ENCODE measurements at regions of chr15 and their contacts with region 1.

Region 1: GRCh38 chr15:52078876-52079700 is 33.5 kb downstream of the BCL2L10 start:
- DNase-seq: peak; percentile 61
- H3K4me3 Mint-ChIP-seq: no peak overlapping the region
- H3K27ac Mint-ChIP-seq: no peak overlapping the region
- H3K4me1 Mint-ChIP-seq: peaks cover 38% of the 10 kb centered on the region
- H3K27me3 Mint-ChIP-seq: no peaks in the 10 kb centered on the region

Region 2: GRCh38 chr15:51888593-51889195 is 190.4 kb before region 1 on chr15:
- intact Hi-C with region 1: loop called (anchors 1 kb)
- DNase-seq: no peak
- H3K4me3 Mint-ChIP-seq: no peak overlapping the region
- H3K27ac Mint-ChIP-seq: no peak overlapping the region
- H3K4me1 Mint-ChIP-seq: peaks cover 8% of the 10 kb centered on the region
- H3K27me3 Mint-ChIP-seq: no peaks in the 10 kb centered on the region

Region 3: DNA sequence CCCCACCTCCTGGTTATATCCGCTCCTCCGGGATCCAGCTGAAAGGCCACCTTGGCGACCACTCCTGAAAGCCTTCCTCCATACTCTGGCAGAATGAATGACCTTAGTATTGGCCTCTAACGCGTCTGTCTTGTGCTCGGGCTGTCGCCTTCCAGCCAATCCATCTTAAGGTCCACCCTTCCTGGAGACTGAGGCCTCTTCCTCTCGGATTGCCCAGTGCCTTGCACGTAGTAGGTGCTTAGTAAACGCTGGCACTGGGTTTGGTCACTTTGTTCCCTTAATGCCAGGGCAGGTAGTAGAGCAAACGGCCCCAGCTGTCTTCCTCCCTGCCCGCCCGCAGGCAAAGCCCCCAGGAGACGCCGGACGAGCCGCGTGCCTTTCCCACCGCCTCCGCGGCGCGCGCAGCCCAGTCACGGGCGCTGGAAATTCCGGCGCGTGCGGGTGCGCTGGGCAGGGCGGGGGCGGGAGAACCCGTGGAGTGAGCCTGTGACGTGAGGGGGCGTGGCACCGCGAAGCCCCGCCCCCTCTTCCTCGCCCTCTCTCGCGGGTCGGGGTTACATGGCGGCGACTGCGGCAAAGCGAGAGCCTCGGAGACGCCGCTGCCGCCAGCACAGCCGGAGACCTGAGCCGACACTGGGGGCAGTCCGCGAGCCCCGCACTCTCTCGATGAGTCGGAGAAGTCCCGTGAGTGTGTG is 60.2 kb before region 1 on chr15 and contains the start of gene MAPK6:
- intact Hi-C with region 1: loop called (anchors 5 kb)
- DNase-seq: peak; percentile 91
- H3K4me3 Mint-ChIP-seq: peak within 1 kb of the TSS; percentile 98
- H3K27ac Mint-ChIP-seq: peak within 1 kb of the TSS; percentile 99
- H3K4me1 Mint-ChIP-seq: peaks cover 46% of the 10 kb centered on the region
- H3K27me3 Mint-ChIP-seq: peaks cover 7% of the 10 kb centered on the region
- total RNA-seq, gene MAPK6: 57.3 and 57.9 TPM in 2 replicates

Region 4: DNA sequence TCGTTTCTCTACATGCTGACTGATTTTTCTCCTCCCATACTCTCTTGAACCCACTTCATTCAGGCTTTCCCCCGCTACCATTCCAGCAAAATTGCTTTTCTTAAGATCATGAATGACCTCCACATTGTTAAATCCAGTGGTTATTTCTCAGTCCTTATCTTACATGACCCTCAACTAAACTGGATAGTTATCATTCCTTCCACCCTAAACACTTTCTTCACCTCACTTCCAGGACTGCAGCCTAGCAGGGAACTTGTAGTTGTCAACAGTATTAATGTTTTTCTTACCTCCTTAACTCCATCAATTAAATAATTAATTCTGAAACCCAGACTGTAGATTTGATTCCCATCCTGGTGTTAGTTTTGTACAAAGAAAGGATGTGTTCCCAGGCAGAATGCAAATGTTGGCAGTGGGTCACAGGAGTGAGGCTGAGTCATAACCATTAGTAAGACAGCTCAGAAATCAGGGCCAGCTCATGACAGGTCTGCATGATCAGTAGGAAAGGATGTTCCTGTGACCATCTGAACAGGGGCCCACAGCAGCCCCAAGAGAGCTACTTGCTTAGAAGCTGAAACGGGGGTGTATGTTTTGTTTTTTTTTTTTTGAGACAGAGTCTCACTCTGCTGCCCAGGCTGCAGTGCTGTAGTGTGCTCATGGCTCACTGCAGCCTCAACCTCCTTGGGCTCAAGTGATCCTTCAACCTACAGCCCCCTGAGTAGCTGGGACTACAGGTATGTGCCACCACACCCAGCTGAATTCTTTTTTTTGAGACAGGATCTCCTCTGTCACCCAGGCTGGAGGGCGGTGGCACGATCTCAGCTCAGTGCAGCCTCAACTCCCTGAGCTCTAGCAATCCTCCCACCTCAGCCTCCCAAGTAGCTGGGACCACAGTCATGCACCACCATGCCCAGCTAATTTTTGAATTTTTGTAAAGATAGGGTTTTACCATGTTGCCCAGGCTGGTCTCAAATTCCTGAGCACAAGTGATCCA is 24.4 kb after region 1 on chr15:
- intact Hi-C with region 1: no loop called
- DNase-seq: no peak
- H3K4me3 Mint-ChIP-seq: no peak overlapping the region
- H3K27ac Mint-ChIP-seq: no peak overlapping the region
- H3K4me1 Mint-ChIP-seq: no peaks in the 10 kb centered on the region
- H3K27me3 Mint-ChIP-seq: peaks cover 9% of the 10 kb centered on the region

Region 5: GRCh38 chr15:52139599-52140491 is 60.8 kb after region 1 on chr15:
- intact Hi-C with region 1: loop called (anchors 5 kb)
- DNase-seq: peak; percentile 53
- H3K4me3 Mint-ChIP-seq: no peak overlapping the region
- H3K27ac Mint-ChIP-seq: peak overlapping the region; percentile 4
- H3K4me1 Mint-ChIP-seq: peaks cover 7% of the 10 kb centered on the region
- H3K27me3 Mint-ChIP-seq: no peaks in the 10 kb centered on the region

Region 6: GRCh38 chr15:52642386-52643361 is 563.6 kb after region 1 on chr15:
- intact Hi-C with region 1: no loop called
- DNase-seq: no peak
- H3K4me3 Mint-ChIP-seq: no peak overlapping the region
- H3K27ac Mint-ChIP-seq: no peak overlapping the region
- H3K4me1 Mint-ChIP-seq: peaks cover 23% of the 10 kb centered on the region
- H3K27me3 Mint-ChIP-seq: no peaks in the 10 kb centered on the region